ENCODE measurements at regions of chr17 and their contacts with region 1.

Region 1: GRCh38 chr17:82698065-82698973 is at the start of gene RAB40B:
- DNase-seq: peak; percentile 96 to 99 (median 99)
- ATAC-seq: peak; percentile 96
- H3K4me3 ChIP-seq: peak within 1 kb of the TSS; percentile 49 to 86
- H3K4me3 Mint-ChIP-seq: peak within 1 kb of the TSS; percentile 85
- H3K27ac ChIP-seq: peak within 1 kb of the TSS in 1 of 2 experiments; percentile 33
- H3K27ac Mint-ChIP-seq: peak within 1 kb of the TSS; percentile 62
- H3K4me1 ChIP-seq: peaks cover 17% of the 10 kb centered on the region
- H3K4me1 Mint-ChIP-seq: peaks cover 18% of the 10 kb centered on the region
- H3K27me3 ChIP-seq: peaks cover 0 to 2% of the 10 kb centered on the region in 2 experiments
- H3K27me3 Mint-ChIP-seq: peaks cover 2% of the 10 kb centered on the region
- CTCF ChIP-seq: no peak
- total RNA-seq, gene RAB40B: 1.1 to 1.2 TPM

Region 2: GRCh38 chr17:82212331-82213250 is 485.7 kb before region 1 on chr17 and contains the start of gene CCDC57:
- CTCF ChIA-PET with region 1: no interaction called
- POLR2A ChIA-PET with region 1: no interaction called
- intact Hi-C with region 1: no loop called
- DNase-seq: peak in 8 of 9 experiments; percentile 54 to 81 (median 66)
- ATAC-seq: peak; percentile 54
- H3K4me3 ChIP-seq: peak within 1 kb of the TSS; percentile 52 to 77
- H3K4me3 Mint-ChIP-seq: peak within 1 kb of the TSS; percentile 85
- H3K27ac ChIP-seq: peak within 1 kb of the TSS in 1 of 2 experiments; percentile 47
- H3K27ac Mint-ChIP-seq: peak within 1 kb of the TSS; percentile 92
- H3K4me1 ChIP-seq: peaks cover 34% of the 10 kb centered on the region
- H3K4me1 Mint-ChIP-seq: peaks cover 34% of the 10 kb centered on the region
- H3K27me3 ChIP-seq: no peaks in the 10 kb centered on the region
- H3K27me3 Mint-ChIP-seq: no peaks in the 10 kb centered on the region
- CTCF ChIP-seq: no peak
- total RNA-seq, gene CCDC57: 175 to 184 TPM

Region 3: DNA sequence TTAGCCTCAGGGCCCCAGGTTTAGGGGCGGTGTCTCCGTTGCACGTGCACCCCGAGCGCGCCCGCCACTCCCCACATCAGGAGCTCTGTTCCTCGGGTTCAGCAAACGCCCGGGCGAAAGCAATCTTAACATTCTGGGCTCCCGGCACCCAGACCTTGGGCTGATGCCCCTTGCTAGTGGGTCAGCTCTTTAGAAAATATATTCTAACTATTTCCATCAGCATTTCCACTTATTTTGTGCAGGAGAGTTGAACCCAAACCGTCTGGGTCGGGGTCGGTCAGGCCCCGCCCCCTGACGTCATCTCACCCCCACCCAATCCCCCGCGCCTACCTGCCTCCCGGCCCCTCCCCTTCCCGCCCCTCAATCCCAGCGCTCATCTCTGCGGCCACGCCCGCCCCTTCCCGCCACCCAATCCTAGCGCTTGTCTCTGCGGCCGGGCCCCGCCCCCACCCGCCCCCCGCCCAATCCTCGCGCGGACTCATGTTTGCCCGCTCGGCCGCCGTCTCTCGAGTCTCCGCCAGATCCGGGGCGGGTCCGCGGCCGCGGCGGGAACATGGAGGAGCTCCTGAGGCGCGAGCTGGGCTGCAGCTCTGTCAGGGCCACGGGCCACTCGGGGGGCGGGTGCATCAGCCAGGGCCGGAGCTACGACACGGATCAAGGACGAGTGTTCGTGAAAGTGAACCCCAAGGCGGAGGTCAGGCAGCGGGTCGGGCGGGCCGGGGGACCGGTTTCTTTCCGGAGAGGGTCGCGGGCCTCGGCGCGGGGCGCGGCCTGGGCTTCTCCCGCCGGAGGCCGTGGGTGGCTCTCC is 18.1 kb after region 1 on chr17 and contains the start of gene FN3KRP:
- CTCF ChIA-PET with region 1: interaction called, 3 read pairs
- POLR2A ChIA-PET with region 1: interaction called, 3 read pairs
- intact Hi-C with region 1: loop called (anchors 1 kb)
- DNase-seq: peak; percentile 68 to 98 (median 92)
- ATAC-seq: peak; percentile 92
- H3K4me3 ChIP-seq: peak within 1 kb of the TSS; percentile 67 to 75
- H3K4me3 Mint-ChIP-seq: peak within 1 kb of the TSS; percentile 98
- H3K27ac ChIP-seq: peak within 1 kb of the TSS; percentile 57 to 65
- H3K27ac Mint-ChIP-seq: peak within 1 kb of the TSS; percentile 93
- H3K4me1 ChIP-seq: peaks cover 18% of the 10 kb centered on the region
- H3K4me1 Mint-ChIP-seq: peaks cover 22% of the 10 kb centered on the region
- H3K27me3 ChIP-seq: no peaks in the 10 kb centered on the region
- H3K27me3 Mint-ChIP-seq: no peaks in the 10 kb centered on the region
- CTCF ChIP-seq: no peak
- total RNA-seq, gene FN3KRP: 29.3 to 30.9 TPM

Region 4: DNA sequence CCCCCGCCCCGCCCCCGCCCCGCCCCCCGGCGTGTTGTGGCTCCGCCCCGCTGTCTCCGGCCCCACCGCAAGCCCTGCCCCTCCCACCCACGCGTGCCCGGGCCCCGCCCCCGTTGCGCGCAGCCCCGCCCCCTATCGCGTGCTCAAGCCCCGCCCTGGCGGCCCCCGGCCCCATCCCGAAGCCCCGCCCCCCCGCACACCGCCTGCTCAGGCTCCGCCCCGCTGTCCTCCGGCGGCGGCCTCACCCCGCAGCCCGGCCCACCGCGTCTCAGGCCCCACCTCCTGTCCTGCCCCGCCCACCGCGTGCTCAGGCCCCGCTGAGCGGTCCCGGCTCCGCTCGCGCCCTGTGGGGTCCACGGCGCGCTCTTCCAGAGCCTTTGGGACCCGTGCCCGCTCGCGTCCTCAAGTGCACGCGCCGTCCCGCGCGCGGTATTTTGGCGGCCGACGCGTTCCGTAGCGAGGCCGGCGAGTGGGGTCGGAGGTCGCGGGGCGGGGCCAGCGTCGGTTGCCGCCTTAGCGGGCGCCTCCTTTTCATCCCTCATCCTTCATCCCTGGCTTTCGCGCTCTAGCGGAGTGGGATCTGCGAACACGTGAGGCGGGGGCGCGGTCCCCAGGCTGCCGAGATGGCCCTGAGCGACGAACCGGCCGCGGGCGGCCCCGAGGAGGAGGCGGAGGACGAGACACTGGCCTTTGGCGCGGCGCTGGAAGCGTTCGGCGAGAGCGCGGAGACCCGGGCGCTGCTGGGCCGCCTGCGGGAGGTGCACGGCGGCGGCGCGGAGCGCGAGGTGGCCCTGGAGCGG is 53.5 kb after region 1 on chr17 and contains the start of gene TBCD:
- CTCF ChIA-PET with region 1: no interaction called
- POLR2A ChIA-PET with region 1: no interaction called
- intact Hi-C with region 1: loop called (anchors 1 kb)
- DNase-seq: peak; percentile 74 to 93 (median 84)
- ATAC-seq: peak; percentile 82
- H3K4me3 ChIP-seq: peak within 1 kb of the TSS; percentile 68 to 90
- H3K4me3 Mint-ChIP-seq: peak within 1 kb of the TSS; percentile 82
- H3K27ac ChIP-seq: peak within 1 kb of the TSS; percentile 25 to 61
- H3K27ac Mint-ChIP-seq: peak within 1 kb of the TSS; percentile 41
- H3K4me1 ChIP-seq: peaks cover 17% of the 10 kb centered on the region
- H3K4me1 Mint-ChIP-seq: peaks cover 28% of the 10 kb centered on the region
- H3K27me3 ChIP-seq: no peaks in the 10 kb centered on the region
- H3K27me3 Mint-ChIP-seq: no peaks in the 10 kb centered on the region
- CTCF ChIP-seq: no peak
- total RNA-seq, gene TBCD: 78.3 to 91.2 TPM

Region 5: DNA sequence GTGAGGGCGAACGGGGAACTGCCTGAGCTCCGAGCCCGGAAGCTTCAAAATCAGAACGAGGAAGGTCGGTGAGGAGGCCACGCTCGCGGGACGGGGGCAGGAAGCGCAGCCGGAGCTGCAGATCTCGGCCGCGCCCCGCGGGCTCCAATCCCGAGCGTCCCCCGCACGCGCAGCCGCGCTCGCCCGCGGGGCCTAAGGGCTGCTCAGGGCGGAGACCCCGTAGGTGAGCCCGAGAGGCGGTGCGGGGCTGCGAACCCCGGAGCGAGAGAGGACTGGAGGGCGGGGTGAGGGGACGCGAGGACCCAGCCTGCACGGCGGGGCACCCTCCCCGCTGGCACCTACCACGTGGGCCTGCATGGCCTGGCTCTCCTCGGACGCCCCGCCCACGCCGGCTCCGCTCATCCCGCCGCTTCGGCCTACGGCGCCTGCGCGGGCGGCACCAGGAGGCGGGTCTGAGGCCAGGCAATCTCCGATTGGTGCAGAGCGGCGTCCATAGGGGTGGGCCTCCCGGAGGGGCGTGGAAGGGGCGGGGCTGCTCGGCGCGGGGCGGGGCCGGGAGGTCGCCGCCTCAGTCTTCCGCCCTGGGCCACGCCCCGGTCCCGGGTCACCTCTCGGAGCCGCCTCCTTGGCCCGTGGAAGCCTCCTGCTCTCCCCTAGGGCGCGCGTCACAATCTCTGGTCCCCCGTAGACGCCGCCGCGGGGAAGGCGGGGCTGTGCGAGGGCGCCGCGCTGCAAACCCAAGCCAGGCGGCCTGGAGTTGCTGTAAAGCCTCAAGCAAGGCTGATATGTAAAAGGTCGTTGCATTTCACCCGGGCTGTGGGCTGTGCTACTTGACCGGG is 353.3 kb after region 1 on chr17:
- CTCF ChIA-PET with region 1: no interaction called
- POLR2A ChIA-PET with region 1: no interaction called
- intact Hi-C with region 1: loop called in 1 of 2 experiments (anchors 1 kb)
- DNase-seq: peak; percentile 95 to 99 (median 99)
- ATAC-seq: peak; percentile 85
- H3K4me3 ChIP-seq: peak overlapping the region; percentile 49 to 68
- H3K4me3 Mint-ChIP-seq: peak overlapping the region; percentile 86
- H3K27ac ChIP-seq: peak overlapping the region; percentile 75 to 87
- H3K27ac Mint-ChIP-seq: peak overlapping the region; percentile 94
- H3K4me1 ChIP-seq: peaks cover 40% of the 10 kb centered on the region
- H3K4me1 Mint-ChIP-seq: peaks cover 40% of the 10 kb centered on the region
- H3K27me3 ChIP-seq: no peaks in the 10 kb centered on the region
- H3K27me3 Mint-ChIP-seq: no peaks in the 10 kb centered on the region
- CTCF ChIP-seq: no peak

Measured in CD8-positive, alpha-beta T cell (primary cell).